Activated CD4-positive, alpha-beta T cell treated with anti-CD3 and anti-CD28 coated beads for 36 hours (primary cell): ENCODE measurements at regions of chr13 and their contacts with region 1.

Region 1: DNA sequence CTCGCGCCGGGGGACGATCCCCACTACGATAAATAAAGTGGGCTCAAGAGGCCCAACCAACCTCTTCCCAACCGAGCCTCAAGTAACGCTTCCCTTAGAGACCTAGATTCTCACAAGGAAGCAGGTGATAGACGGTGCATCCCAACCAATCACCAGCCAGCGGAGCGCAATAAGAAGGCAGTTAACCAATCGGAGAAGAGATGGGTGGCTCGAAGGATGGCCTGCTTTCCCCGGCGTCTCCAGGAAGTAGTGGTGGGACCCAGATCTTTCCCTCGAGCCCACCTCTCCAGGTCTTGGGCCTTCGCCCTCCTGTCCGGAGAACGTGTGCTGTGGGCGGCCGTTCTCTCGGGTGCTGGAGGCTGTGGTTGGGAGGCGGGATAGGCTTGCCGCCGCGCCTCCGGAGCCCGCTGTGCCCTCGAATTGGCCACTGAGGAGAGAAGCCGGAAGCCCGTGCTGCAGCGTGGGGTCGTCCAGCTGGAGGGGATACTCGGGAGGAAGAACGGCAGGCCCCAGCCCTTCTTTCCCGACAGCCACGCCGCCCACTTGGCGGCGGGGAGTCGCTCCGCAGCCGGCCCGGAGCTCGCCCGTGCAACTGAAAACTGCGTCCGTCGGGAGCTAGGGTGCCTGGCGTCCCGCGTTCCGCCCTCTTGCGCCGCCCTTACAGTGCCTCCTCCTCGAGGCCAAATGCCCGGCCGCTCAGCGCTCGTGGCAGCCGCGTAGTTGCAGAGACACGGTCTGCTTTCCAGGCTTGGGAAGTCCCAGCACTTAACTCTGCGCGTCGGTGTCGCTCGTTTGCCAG is at the start of gene RNF6:
- DNase-seq: peak; percentile 90
- ATAC-seq: peak; percentile 98
- H3K4me3 Mint-ChIP-seq: peak within 1 kb of the TSS; percentile 100
- H3K27ac Mint-ChIP-seq: peak within 1 kb of the TSS; percentile 100
- H3K4me1 Mint-ChIP-seq: peaks cover 33% of the 10 kb centered on the region
- H3K27me3 Mint-ChIP-seq: no peaks in the 10 kb centered on the region
- total RNA-seq, gene RNF6: 37.0 to 42.4 TPM

Region 2: DNA sequence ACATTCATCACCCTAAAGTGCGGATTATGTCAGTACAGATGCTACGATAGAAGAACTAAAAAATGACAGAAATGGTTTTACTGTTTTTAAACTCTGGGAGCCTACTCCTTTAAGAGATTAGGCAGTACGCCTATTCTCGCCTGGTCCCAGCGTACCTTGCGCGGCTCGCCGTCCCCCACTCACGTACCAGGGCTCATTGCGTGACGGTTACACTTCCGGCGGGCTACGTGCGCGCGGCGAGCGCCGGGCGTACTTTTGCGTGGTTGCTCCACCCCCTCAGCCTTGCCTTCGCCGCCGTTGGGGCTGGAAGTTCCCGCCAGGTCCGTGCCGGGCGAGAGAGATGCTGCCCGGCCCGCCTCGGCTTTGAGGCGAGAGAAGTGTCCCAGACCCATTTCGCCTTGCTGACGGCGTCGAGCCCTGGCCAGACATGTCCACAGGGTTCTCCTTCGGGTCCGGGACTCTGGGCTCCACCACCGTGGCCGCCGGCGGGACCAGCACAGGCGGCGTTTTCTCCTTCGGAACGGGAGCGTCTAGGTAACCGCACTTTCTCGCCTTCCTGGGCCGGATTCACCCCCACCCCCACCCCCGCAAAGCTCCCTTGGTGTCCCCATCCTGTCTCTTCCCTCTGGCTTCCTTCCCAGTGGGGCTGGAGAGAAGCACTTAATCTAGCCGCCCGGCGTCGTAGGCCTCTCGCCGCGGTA is 920.4 kb before region 1 on chr13 and contains the start of gene NUP58:
- CTCF ChIA-PET with region 1: no interaction called
- POLR2A ChIA-PET with region 1: no interaction called
- intact Hi-C with region 1: loop called in 1 of 2 experiments (anchors 1 kb)
- DNase-seq: peak; percentile 97
- ATAC-seq: peak; percentile 98
- H3K4me3 Mint-ChIP-seq: peak within 1 kb of the TSS; percentile 94
- H3K27ac Mint-ChIP-seq: peak within 1 kb of the TSS; percentile 95
- H3K4me1 Mint-ChIP-seq: peaks cover 30% of the 10 kb centered on the region
- H3K27me3 Mint-ChIP-seq: peaks cover 4% of the 10 kb centered on the region
- total RNA-seq, gene NUP58: 134 to 137 TPM

Region 3: GRCh38 chr13:26253787-26254582 is 32.1 kb after region 1 on chr13 and contains the start of gene CDK8:
- CTCF ChIA-PET with region 1: interaction called, 3 read pairs
- POLR2A ChIA-PET with region 1: no interaction called
- intact Hi-C with region 1: loop called (anchors 1 kb)
- DNase-seq: peak; percentile 93
- ATAC-seq: peak; percentile 93
- H3K4me3 Mint-ChIP-seq: peak within 1 kb of the TSS; percentile 82
- H3K27ac Mint-ChIP-seq: peak within 1 kb of the TSS; percentile 84
- H3K4me1 Mint-ChIP-seq: peaks cover 38% of the 10 kb centered on the region
- H3K27me3 Mint-ChIP-seq: no peaks in the 10 kb centered on the region
- total RNA-seq, gene CDK8: 17.4 to 24.3 TPM

Region 4: DNA sequence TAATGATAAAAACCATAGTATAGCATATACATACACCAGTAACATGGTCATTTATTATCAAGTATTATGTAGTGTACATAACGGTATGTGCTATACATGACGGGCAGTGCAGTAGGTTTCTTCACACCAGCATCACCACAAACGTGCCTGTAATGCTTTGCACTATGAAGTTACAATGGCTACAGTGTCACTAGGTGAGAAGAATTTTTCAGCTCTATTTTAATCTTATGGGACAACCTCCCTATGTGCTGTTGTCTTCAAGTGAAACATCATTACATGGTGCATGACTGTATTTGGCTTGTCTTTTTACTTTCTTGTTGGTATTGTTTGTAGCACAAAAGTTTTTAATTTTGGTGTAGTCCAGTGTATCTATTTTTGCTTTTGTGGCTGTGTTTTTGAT is 50.7 kb after region 1 on chr13:
- CTCF ChIA-PET with region 1: no interaction called
- POLR2A ChIA-PET with region 1: no interaction called
- intact Hi-C with region 1: no loop called
- DNase-seq: no peak
- ATAC-seq: no peak
- H3K4me3 Mint-ChIP-seq: no peak overlapping the region
- H3K27ac Mint-ChIP-seq: no peak overlapping the region
- H3K4me1 Mint-ChIP-seq: peaks cover 22% of the 10 kb centered on the region
- H3K27me3 Mint-ChIP-seq: no peaks in the 10 kb centered on the region

Region 5: GRCh38 chr13:26325876-26326275 is 104.0 kb after region 1 on chr13:
- CTCF ChIA-PET with region 1: no interaction called
- POLR2A ChIA-PET with region 1: no interaction called
- intact Hi-C with region 1: no loop called
- DNase-seq: no peak
- ATAC-seq: no peak
- H3K4me3 Mint-ChIP-seq: no peak overlapping the region
- H3K27ac Mint-ChIP-seq: no peak overlapping the region
- H3K4me1 Mint-ChIP-seq: peaks cover 53% of the 10 kb centered on the region
- H3K27me3 Mint-ChIP-seq: no peaks in the 10 kb centered on the region

Region 6: DNA sequence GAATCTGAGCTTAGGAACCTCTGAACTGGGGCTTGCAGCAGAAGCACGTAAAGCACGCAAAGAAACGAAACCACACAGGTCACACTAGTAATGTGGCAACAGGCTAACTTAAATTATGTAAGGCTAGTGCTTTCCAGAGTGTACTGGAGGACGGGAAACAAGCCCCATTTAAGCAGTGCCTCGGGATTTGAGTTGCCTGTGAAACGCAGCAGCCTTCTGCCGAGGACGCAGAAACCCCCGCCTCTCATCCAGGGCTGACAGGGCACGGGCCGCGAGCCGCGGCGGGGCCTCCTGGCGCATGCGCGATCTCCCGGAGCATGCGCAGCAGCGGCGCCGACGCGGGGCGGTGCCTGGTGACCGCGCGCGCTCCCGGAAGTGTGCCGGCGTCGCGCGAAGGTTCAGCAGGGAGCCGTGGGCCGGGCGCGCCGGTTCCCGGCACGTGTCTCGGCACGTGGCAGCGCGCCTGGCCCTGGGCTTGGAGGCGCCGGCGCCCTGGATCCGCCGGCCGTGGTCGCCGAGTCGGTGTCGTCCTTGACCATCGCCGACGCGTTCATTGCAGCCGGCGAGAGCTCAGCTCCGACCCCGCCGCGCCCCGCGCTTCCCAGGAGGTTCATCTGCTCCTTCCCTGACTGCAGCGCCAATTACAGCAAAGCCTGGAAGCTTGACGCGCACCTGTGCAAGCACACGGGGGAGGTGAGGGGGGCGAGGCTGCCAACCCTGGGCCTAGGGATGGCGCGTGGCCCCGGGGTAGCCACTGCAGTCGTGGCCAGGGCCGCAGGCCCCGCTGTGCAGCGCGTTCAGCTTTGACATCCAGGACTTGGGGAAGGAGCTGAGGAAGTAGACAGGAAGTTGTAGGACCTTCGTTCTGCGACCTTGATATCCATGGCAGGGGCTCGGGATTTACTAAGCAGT is 1202.6 kb after region 1 on chr13 and contains the start of gene GTF3A:
- CTCF ChIA-PET with region 1: no interaction called
- POLR2A ChIA-PET with region 1: no interaction called
- intact Hi-C with region 1: loop called in 1 of 2 experiments (anchors 10 kb)
- DNase-seq: peak; percentile 92
- ATAC-seq: peak; percentile 66
- H3K4me3 Mint-ChIP-seq: peak within 1 kb of the TSS; percentile 80
- H3K27ac Mint-ChIP-seq: peak within 1 kb of the TSS; percentile 97
- H3K4me1 Mint-ChIP-seq: peaks cover 45% of the 10 kb centered on the region
- H3K27me3 Mint-ChIP-seq: no peaks in the 10 kb centered on the region
- total RNA-seq, gene GTF3A: 177 to 208 TPM

Region 7: DNA sequence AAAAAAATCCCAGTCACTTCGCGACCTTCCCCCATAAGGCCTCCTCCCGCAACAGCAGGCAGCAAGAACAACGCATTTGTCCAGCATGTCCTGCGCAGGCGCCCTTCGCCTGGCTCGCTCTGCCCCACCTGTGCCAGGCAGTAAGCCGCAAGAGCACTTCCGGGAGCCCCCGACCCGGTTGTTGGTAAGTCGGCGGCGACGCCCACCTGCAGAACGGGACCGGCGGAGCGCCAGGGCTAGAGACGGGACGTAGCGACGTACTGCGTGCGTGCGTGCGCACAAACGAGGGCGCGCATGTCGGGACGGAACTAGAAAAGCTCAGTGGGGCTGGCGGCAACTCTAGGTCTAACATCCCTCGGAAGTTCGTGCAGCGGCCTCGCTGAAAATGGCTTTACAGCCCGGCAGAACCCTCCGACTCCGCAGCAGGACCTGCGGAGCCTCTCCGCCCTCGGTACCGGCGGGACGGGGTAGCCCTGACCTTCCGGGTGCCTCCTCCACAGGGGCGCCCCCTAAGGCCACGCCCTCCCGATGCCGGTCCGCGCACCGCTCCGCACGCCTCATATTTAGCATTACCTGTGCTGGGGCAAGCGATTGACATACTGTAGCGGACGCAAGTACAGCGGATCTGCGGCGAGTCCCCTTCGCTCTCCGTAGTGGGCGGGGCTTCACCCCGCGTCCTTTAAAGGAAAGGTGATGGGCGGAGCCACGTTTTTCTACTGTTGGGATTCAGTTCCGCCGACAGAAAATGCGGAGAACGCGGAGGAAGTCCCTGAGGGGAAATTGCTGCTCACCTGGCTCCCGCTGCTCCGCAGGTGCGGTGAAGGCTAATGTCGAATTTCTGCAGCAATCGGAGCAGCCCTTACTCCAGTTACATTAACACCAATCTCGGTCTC is 1228.3 kb after region 1 on chr13 and contains the start of gene MTIF3:
- CTCF ChIA-PET with region 1: no interaction called
- POLR2A ChIA-PET with region 1: no interaction called
- intact Hi-C with region 1: loop called in 1 of 2 experiments (anchors 2 kb)
- DNase-seq: peak; percentile 98
- ATAC-seq: peak; percentile 86
- H3K4me3 Mint-ChIP-seq: peak within 1 kb of the TSS; percentile 89
- H3K27ac Mint-ChIP-seq: peak within 1 kb of the TSS; percentile 99
- H3K4me1 Mint-ChIP-seq: peaks cover 53% of the 10 kb centered on the region
- H3K27me3 Mint-ChIP-seq: no peaks in the 10 kb centered on the region
- total RNA-seq, gene MTIF3: 27.5 to 43.0 TPM

Region 8: GRCh38 chr13:27620377-27621115 is 1398.6 kb after region 1 on chr13 and contains the start of gene LNX2:
- CTCF ChIA-PET with region 1: no interaction called
- POLR2A ChIA-PET with region 1: no interaction called
- intact Hi-C with region 1: loop called in 1 of 2 experiments (anchors 2 kb)
- DNase-seq: peak; percentile 98
- ATAC-seq: peak; percentile 92
- H3K4me3 Mint-ChIP-seq: peak within 1 kb of the TSS; percentile 92
- H3K27ac Mint-ChIP-seq: peak within 1 kb of the TSS; percentile 91
- H3K4me1 Mint-ChIP-seq: peaks cover 51% of the 10 kb centered on the region
- H3K27me3 Mint-ChIP-seq: no peaks in the 10 kb centered on the region
- total RNA-seq, gene LNX2: 4.7 to 4.8 TPM